Ascending aorta (tissue), 2 donors: ENCODE measurements at regions of chr4 and their contacts with region 1.

Region 1: GRCh38 chr4:145618932-145619638 is at the start of gene MMAA:
- DNase-seq: peak; percentile 82 to 97
- H3K4me3 ChIP-seq: peak within 1 kb of the TSS; percentile 78 to 89
- H3K27ac ChIP-seq: peak within 1 kb of the TSS; percentile 95 to 98
- H3K4me1 ChIP-seq: peaks cover 0 to 5% of the 10 kb centered on the region in 2 donors
- H3K27me3 ChIP-seq: no peaks in the 10 kb centered on the region
- CTCF ChIP-seq: peak; percentile 44 to 67 (median 67)
- total RNA-seq, gene MMAA: 3.9 TPM

Region 2: GRCh38 chr4:144174401-144175067 is 1444.6 kb before region 1 on chr4:
- intact Hi-C with region 1: loop called (anchors 10 kb)
- DNase-seq: no peak
- H3K4me3 ChIP-seq: no peak overlapping the region
- H3K27ac ChIP-seq: no peak overlapping the region
- H3K4me1 ChIP-seq: no peaks in the 10 kb centered on the region
- H3K27me3 ChIP-seq: no peaks in the 10 kb centered on the region
- CTCF ChIP-seq: peak; percentile 15 to 44 (median 19)

Region 3: GRCh38 chr4:145234091-145234706 is 384.9 kb before region 1 on chr4:
- intact Hi-C with region 1: loop called (anchors 5 kb)
- DNase-seq: no peak
- H3K4me3 ChIP-seq: no peak overlapping the region
- H3K27ac ChIP-seq: no peak overlapping the region
- H3K4me1 ChIP-seq: no peaks in the 10 kb centered on the region
- H3K27me3 ChIP-seq: no peaks in the 10 kb centered on the region
- CTCF ChIP-seq: peak; percentile 19 to 56 (median 32)

Region 4: GRCh38 chr4:145887241-145887991 is 268.3 kb after region 1 on chr4:
- intact Hi-C with region 1: loop called (anchors 2 kb)
- DNase-seq: no peak
- H3K4me3 ChIP-seq: peak overlapping the region in 1 of 2 donors; percentile 12
- H3K27ac ChIP-seq: peak overlapping the region; percentile 78 to 81
- H3K4me1 ChIP-seq: peaks cover 5 to 16% of the 10 kb centered on the region in 2 donors
- H3K27me3 ChIP-seq: no peaks in the 10 kb centered on the region
- CTCF ChIP-seq: peak in 1 of 3 experiments; percentile 28

Region 5: GRCh38 chr4:146202665-146203064 is 583.6 kb after region 1 on chr4:
- intact Hi-C with region 1: no loop called
- DNase-seq: no peak
- H3K4me3 ChIP-seq: no peak overlapping the region
- H3K27ac ChIP-seq: no peak overlapping the region
- H3K4me1 ChIP-seq: no peaks in the 10 kb centered on the region
- H3K27me3 ChIP-seq: no peaks in the 10 kb centered on the region
- CTCF ChIP-seq: no peak

Region 6: DNA sequence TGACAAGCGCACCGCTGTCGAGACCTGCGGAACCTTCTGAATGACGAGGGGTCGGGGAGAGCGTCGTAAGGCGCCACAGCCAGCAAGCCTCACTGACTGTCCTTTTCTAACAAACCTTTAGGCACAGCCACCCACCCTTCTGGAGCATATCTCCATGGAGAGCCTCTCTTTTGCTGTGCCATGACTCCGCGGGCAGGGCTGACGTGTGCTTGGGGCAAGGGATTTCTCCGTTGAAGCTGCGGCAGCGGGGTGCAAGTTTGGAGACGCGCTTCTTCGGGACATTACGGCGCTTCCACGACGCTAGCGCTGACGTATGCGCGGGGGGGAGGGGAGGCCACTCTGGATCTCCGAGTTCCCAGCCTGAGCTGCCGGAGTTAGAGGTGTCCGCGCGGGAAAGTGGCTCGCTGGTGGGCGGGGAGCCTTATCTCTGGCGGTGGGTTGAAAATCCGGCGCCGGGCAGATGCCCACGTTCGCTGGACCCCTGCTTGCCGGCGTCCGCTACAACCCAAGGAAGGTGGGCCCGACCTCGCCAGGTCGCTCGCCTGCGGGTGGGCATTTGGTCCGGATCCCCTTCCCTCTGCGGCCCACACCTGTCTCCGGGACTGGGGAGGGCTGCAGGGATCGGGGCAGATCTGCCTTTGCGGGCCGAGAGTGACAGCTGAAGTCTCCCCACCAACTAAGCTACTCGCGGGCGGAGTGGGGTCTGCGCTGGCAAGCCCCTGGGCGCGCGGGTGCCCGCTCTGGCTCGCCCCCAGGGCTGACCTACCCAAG is 903.2 kb after region 1 on chr4:
- intact Hi-C with region 1: loop called (anchors 5 kb)
- DNase-seq: peak; percentile 53 to 94
- H3K4me3 ChIP-seq: peak overlapping the region; percentile 81 to 94
- H3K27ac ChIP-seq: peak overlapping the region; percentile 63 to 78
- H3K4me1 ChIP-seq: no peaks in the 10 kb centered on the region
- H3K27me3 ChIP-seq: no peaks in the 10 kb centered on the region
- CTCF ChIP-seq: no peak